Activated T-helper 1 cell treated with anti-CD3 and anti-CD28 coated beads, Interleukin-12 subunit alpha, Interleukin-12 subunit beta, Interleukin-2, Interleukin-4 antibody, amounts not matched to agents 30 ng/mL and 10 ng/mL and 1 ng/mL, durations not matched to agents 14 hours and 24 hours and 36 hours (primary cell): ENCODE measurements at regions of chr3 and their contacts with region 1.

Region 1: GRCh38 chr3:171257251-171258203 is 202.7 kb downstream of the TNIK start:
- DNase-seq: no peak
- H3K4me3 Mint-ChIP-seq: peak overlapping the region; percentile 29
- H3K27ac Mint-ChIP-seq: peak overlapping the region; percentile 94
- H3K4me1 Mint-ChIP-seq: peaks cover 92% of the 10 kb centered on the region
- H3K27me3 Mint-ChIP-seq: no peaks in the 10 kb centered on the region

Region 2: GRCh38 chr3:170467007-170467406 is 790.5 kb before region 1 on chr3:
- intact Hi-C with region 1: no loop called
- DNase-seq: no peak
- H3K4me3 Mint-ChIP-seq: no peak overlapping the region
- H3K27ac Mint-ChIP-seq: no peak overlapping the region
- H3K4me1 Mint-ChIP-seq: no peaks in the 10 kb centered on the region
- H3K27me3 Mint-ChIP-seq: peaks cover 6% of the 10 kb centered on the region

Region 3: DNA sequence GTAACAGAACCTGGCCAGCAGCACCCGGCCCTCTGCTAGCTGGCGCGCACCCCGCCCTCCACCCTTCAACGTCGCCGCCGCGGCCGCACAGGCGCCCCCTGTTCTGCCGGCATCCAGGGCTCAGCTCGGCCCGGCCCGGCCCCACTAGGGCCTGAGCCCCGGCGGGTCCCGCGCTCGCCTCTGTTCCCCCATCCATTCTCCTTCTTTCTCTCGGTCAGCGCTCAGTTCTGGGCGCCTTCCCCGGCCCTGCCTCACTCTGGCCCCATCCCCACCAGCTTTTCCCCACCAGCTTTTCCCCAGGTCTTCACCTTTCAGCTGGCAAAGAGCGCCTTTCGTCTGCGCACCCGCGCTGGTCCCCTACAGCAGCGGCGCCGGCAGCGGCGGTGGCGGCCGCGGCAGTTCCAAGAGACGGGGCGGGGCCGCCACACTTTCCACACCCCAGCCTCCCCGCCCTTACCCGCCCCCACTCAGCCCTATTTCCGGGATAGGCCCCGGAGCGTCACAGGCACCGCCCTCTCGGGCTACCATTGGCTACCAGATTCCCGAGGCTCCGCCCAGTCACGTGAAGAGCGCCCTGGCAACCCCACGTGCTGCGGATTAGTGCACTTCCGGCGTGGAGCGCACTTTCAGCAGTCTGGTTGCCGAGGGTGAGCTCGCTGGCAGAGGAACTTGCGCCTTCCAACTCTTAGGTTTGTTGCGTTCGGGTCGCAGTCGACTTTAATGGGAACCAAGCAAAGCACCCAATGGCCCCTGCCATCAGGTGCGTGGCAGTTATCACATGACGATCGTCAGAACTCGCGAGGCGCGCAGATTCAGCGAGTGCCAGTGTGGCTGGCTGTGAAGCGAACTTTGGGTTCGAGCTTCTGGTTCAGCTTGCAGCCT is 349.1 kb before region 1 on chr3 and contains the start of gene EIF5A2:
- intact Hi-C with region 1: loop called (anchors 5 kb)
- DNase-seq: peak; percentile 88
- H3K4me3 Mint-ChIP-seq: peak within 1 kb of the TSS; percentile 96
- H3K27ac Mint-ChIP-seq: peak within 1 kb of the TSS; percentile 85
- H3K4me1 Mint-ChIP-seq: peaks cover 24% of the 10 kb centered on the region
- H3K27me3 Mint-ChIP-seq: peaks cover 12% of the 10 kb centered on the region
- total RNA-seq, gene EIF5A2: 8.1 and 10.5 TPM in 2 replicates

Region 4: GRCh38 chr3:171225708-171226107 is 31.8 kb before region 1 on chr3:
- intact Hi-C with region 1: loop called (anchors 1 kb)
- DNase-seq: no peak
- H3K4me3 Mint-ChIP-seq: no peak overlapping the region
- H3K27ac Mint-ChIP-seq: no peak overlapping the region
- H3K4me1 Mint-ChIP-seq: peaks cover 58% of the 10 kb centered on the region
- H3K27me3 Mint-ChIP-seq: no peaks in the 10 kb centered on the region

Region 5: DNA sequence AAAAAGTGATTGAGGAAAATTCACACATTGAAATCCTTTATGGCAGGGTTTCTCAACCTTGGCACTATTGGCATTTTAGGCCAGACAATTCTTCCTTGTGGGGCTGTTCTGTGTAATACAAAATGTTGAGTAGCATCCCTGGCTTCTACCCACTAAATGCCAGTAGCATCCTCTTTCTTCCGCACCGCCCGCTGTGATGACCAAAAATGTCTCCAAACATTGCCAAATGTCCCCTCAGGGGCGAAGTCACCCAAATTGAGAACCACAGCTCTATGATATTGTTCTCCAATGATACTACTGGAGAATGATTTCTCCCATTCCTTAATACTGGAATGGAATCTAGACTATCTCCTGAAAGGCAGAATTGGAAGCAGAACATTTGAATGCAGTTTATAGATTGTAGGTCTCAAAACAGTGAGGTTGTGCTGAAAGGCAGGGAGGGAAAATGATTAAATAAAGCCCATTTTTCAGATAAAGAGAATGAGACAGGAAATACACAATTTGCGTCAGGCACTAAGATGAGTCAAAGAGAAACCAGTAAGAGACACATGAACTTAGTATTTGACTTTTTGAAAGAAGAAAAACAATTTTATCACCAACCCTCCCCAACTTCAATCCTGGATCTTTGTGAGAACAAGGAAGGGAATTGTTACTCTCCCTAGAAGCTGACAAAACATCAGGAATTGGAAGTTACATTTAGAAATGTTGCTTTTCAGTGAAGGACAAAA is 304.2 kb after region 1 on chr3:
- intact Hi-C with region 1: loop called (anchors 5 kb)
- DNase-seq: no peak
- H3K4me3 Mint-ChIP-seq: peak overlapping the region; percentile 50
- H3K27ac Mint-ChIP-seq: peak overlapping the region; percentile 92
- H3K4me1 Mint-ChIP-seq: peaks cover 66% of the 10 kb centered on the region
- H3K27me3 Mint-ChIP-seq: no peaks in the 10 kb centered on the region

Region 6: DNA sequence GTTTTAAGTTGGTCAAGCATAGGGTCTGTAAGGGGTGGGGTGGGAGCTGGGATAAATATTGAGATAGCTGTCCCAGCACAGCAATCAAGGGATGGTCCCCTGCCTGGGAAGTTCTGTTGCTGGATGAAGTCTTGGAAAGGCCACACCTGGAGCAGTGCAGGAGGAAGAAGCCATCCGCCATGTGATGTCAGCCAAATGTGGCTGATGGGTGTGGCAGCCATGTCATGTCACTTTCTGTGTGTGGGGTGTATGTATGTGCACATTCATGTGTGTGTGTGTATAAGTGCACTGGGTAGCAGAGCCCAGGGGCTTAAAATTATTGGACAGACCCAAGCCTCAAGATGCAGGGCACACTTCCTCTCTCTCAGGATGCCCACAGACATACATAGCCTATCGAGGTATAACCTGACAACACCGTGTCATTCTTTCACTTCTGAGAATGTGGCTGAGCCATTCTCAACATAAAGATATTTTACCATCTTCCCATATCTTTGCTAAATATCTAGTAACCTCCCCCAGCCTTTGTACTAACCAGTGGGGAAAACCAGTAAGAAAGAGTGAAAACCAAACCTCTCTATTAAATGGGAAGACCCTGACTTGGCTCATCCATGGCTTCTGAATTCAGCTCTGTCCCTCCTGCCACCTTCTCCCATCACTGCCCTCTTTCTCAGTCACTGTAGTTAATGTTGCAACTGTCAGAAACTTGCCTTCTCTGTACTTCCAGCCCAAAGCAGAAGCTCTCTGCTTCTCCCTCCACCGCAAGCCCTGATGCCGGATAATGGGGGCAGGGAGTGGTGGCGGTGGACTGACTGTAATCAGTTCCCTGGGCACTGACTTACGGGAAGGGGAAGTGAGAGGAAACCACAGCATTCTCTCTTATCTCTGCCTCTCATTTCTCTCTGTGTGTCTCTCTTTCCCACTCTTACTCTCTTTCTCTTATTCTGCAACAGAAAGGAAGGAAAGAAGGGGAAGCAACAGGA is 1254.5 kb after region 1 on chr3:
- intact Hi-C with region 1: loop called (anchors 10 kb)
- DNase-seq: peak; percentile 69
- H3K4me3 Mint-ChIP-seq: peak overlapping the region; percentile 43
- H3K27ac Mint-ChIP-seq: peak overlapping the region; percentile 88
- H3K4me1 Mint-ChIP-seq: peaks cover 98% of the 10 kb centered on the region
- H3K27me3 Mint-ChIP-seq: no peaks in the 10 kb centered on the region